ENCODE measurements at regions of chr17 and their contacts with region 1.

Region 1: GRCh38 chr17:27473748-27474609 is 17.7 kb downstream of the KSR1 start:
- DNase-seq: peak; percentile 94
- ATAC-seq: peak; percentile 35
- H3K4me3 Mint-ChIP-seq: peak overlapping the region; percentile 40
- H3K27ac Mint-ChIP-seq: peak overlapping the region; percentile 100
- H3K4me1 Mint-ChIP-seq: peaks cover 86% of the 10 kb centered on the region
- H3K27me3 Mint-ChIP-seq: no peaks in the 10 kb centered on the region
- CTCF ChIP-seq: no peak

Region 2: GRCh38 chr17:27206447-27206846 is 267.5 kb before region 1 on chr17:
- CTCF ChIA-PET with region 1: no interaction called
- POLR2A ChIA-PET with region 1: no interaction called
- intact Hi-C with region 1: no loop called
- DNase-seq: peak; percentile 37
- ATAC-seq: no peak
- H3K4me3 Mint-ChIP-seq: no peak overlapping the region
- H3K27ac Mint-ChIP-seq: no peak overlapping the region
- H3K4me1 Mint-ChIP-seq: peaks cover 3% of the 10 kb centered on the region
- H3K27me3 Mint-ChIP-seq: peaks cover 3% of the 10 kb centered on the region
- CTCF ChIP-seq: no peak

Region 3: GRCh38 chr17:27360507-27360906 is 113.5 kb before region 1 on chr17:
- CTCF ChIA-PET with region 1: no interaction called
- POLR2A ChIA-PET with region 1: no interaction called
- intact Hi-C with region 1: no loop called
- DNase-seq: no peak
- ATAC-seq: no peak
- H3K4me3 Mint-ChIP-seq: no peak overlapping the region
- H3K27ac Mint-ChIP-seq: no peak overlapping the region
- H3K4me1 Mint-ChIP-seq: peaks cover 10% of the 10 kb centered on the region
- H3K27me3 Mint-ChIP-seq: no peaks in the 10 kb centered on the region
- CTCF ChIP-seq: no peak

Region 4: GRCh38 chr17:27455914-27456680 is 17.9 kb before region 1 on chr17 and contains the start of gene KSR1:
- CTCF ChIA-PET with region 1: interaction called, 40 read pairs
- POLR2A ChIA-PET with region 1: interaction called, 83 read pairs
- intact Hi-C with region 1: no loop called
- DNase-seq: peak; percentile 88
- ATAC-seq: peak; percentile 93
- H3K4me3 Mint-ChIP-seq: peak within 1 kb of the TSS; percentile 94
- H3K27ac Mint-ChIP-seq: peak within 1 kb of the TSS; percentile 85
- H3K4me1 Mint-ChIP-seq: peaks cover 38% of the 10 kb centered on the region
- H3K27me3 Mint-ChIP-seq: peaks cover 3% of the 10 kb centered on the region
- CTCF ChIP-seq: peak; percentile 24
- total RNA-seq, gene KSR1: 53.9 to 58.2 TPM

Region 5: GRCh38 chr17:27578718-27579085 is 104.7 kb after region 1 on chr17:
- CTCF ChIA-PET with region 1: interaction called, 9 read pairs
- POLR2A ChIA-PET with region 1: interaction called, 8 read pairs
- intact Hi-C with region 1: loop called (anchors 5 kb)
- DNase-seq: peak; percentile 92
- ATAC-seq: peak; percentile 78
- H3K4me3 Mint-ChIP-seq: peak overlapping the region; percentile 40
- H3K27ac Mint-ChIP-seq: peak overlapping the region; percentile 87
- H3K4me1 Mint-ChIP-seq: peaks cover 64% of the 10 kb centered on the region
- H3K27me3 Mint-ChIP-seq: no peaks in the 10 kb centered on the region
- CTCF ChIP-seq: no peak

Region 6: GRCh38 chr17:28041068-28041843 is 567.3 kb after region 1 on chr17:
- CTCF ChIA-PET with region 1: no interaction called
- POLR2A ChIA-PET with region 1: no interaction called
- intact Hi-C with region 1: loop called (anchors 10 kb)
- DNase-seq: peak; percentile 100
- ATAC-seq: peak; percentile 95
- H3K4me3 Mint-ChIP-seq: peak overlapping the region; percentile 77
- H3K27ac Mint-ChIP-seq: peak overlapping the region; percentile 86
- H3K4me1 Mint-ChIP-seq: peaks cover 50% of the 10 kb centered on the region
- H3K27me3 Mint-ChIP-seq: no peaks in the 10 kb centered on the region
- CTCF ChIP-seq: no peak

Measured in activated CD8-positive, alpha-beta T cell treated with anti-CD3 and anti-CD28 coated beads for 36 hours (primary cell).